Tibial artery (tissue), 4 donors: ENCODE measurements at regions of chr16 and their contacts with region 1.

Region 1: GRCh38 chr16:25395528-25395927 is 137.9 kb upstream of the ZKSCAN2 start:
- DNase-seq: no peak
- H3K4me3 ChIP-seq: no peak overlapping the region
- H3K27ac ChIP-seq: no peak overlapping the region
- H3K4me1 ChIP-seq: no peaks in the 10 kb centered on the region
- H3K27me3 ChIP-seq: no peaks in the 10 kb centered on the region
- CTCF ChIP-seq: no peak

Region 2: GRCh38 chr16:25443994-25444393 is 48.5 kb after region 1 on chr16:
- intact Hi-C with region 1: loop called (anchors 1 kb)
- DNase-seq: no peak
- H3K4me3 ChIP-seq: no peak overlapping the region
- H3K27ac ChIP-seq: no peak overlapping the region
- H3K4me1 ChIP-seq: no peaks in the 10 kb centered on the region
- H3K27me3 ChIP-seq: no peaks in the 10 kb centered on the region
- CTCF ChIP-seq: no peak